CD4-positive, alpha-beta memory T cell (primary cell): ENCODE measurements at regions of chr1 and their contacts with region 1.

Region 1: DNA sequence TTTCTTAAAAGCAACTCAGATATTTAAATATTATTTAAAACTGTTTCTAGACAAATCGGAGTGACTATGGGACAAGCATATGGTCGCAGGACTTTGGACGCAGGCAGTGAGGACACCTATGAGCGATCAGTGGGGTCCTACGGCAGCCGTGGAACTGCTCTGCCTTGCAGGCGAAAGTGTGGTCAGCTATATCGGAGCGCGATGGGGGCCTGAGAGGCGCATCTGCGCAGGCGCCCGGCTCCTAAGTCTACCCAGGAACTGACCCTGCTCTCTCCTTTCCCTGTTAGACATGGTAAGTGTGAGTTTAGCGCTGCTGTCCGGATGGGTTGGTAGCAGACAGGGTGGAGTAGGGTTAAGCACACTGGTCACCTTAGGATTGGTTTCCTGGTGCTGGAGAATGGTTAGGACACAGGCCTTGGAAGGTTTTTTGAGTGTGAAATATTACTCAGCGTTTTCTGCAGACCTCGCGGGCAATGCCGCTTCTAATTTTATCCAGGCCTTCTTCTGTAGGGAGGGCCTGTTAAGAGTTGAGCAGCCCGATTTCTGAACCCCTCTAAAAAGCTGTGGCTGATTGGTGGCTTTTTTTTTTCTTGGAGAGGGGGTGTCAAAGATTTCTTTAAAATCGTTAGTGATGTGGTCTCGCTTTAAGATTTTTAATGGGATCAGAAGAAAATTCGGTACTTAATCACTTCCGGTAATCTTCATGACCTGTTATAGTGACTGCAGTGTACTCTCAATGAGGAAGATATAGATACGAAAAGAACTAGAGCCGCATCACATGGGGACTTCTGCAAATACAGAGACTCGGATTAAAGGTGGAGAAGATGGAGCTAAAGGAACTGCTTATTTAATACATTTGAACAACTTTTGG is at the start of gene RABGGTB:
- DNase-seq: peak; percentile 93 to 94 (median 94)
- H3K4me3 ChIP-seq: peak within 1 kb of the TSS; percentile 88 to 95
- H3K4me3 Mint-ChIP-seq: peak within 1 kb of the TSS; percentile 93 to 100 (median 99)
- H3K27ac ChIP-seq: peak within 1 kb of the TSS; percentile 73
- H3K27ac Mint-ChIP-seq: peak within 1 kb of the TSS; percentile 95 to 100 (median 98)
- H3K4me1 ChIP-seq: peaks cover 50% of the 10 kb centered on the region
- H3K4me1 Mint-ChIP-seq: peaks cover 34 to 61% (median 49%) of the 10 kb centered on the region in 4 donors
- H3K27me3 ChIP-seq: no peaks in the 10 kb centered on the region
- H3K27me3 Mint-ChIP-seq: peaks cover 0 to 3% of the 10 kb centered on the region in 2 donors
- total RNA-seq, gene RABGGTB: 94.4 to 97.8 TPM

Region 2: GRCh38 chr1:74197657-74198552 is 1588.3 kb before region 1 on chr1 and contains the starts of genes FPGT and LRRIQ3:
- CTCF ChIA-PET with region 1: no interaction called
- POLR2A ChIA-PET with region 1: no interaction called
- intact Hi-C with region 1: loop called (anchors 5 kb)
- DNase-seq: peak; percentile 93 to 97 (median 97)
- H3K4me3 ChIP-seq: peak within 1 kb of the TSS; percentile 79 to 92
- H3K4me3 Mint-ChIP-seq: peak within 1 kb of the TSS; percentile 91 to 96 (median 94)
- H3K27ac ChIP-seq: peak within 1 kb of the TSS; percentile 62
- H3K27ac Mint-ChIP-seq: peak within 1 kb of the TSS; percentile 91 to 98 (median 96)
- H3K4me1 ChIP-seq: peaks cover 22% of the 10 kb centered on the region
- H3K4me1 Mint-ChIP-seq: peaks cover 10 to 24% (median 17%) of the 10 kb centered on the region in 4 donors
- H3K27me3 ChIP-seq: no peaks in the 10 kb centered on the region
- H3K27me3 Mint-ChIP-seq: no peaks in the 10 kb centered on the region
- total RNA-seq, gene FPGT: 13.1 to 14.8 TPM
- total RNA-seq, gene LRRIQ3: 2.2 TPM

Region 3: DNA sequence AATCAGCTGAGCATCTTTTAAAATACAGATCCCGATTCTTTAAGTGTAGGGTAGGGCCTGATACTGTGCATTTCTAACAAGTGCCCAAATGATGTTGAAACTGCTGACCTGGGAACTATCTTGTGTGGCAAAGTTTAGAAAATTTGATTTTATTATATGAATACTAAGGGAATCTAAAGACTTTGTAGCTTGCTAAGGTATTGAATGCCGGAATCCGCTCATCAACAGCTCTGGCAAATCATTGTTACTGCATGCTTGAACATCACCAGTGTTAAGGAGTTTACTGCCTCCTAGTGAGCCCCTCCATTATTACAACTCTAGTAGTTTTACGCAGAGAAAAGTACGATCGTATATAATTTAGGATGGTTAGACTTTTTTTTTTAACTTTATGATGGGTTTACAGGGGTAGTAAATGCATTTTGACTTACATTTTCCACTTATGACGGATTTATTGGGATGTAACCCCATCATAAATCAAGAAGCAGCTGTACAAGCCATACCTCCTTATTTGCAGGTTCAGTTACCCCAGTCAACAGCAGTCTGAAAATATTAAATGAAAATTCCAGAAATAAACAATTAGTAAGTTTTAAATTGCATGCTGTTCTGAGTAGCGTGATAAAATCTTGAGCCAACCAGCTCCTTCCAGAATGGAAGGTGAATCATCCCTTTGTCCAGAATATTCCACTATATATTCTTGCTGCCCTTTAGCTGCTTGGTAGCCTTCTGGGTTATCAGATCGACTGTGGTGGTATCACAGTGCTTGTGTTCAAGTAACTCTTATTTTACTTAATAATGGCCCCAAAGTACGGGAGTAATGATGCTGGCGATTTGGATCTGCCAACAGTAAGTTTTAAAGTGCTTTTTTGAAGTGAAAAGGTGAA is 1052.4 kb before region 1 on chr1:
- CTCF ChIA-PET with region 1: no interaction called
- POLR2A ChIA-PET with region 1: interaction called, 4 read pairs
- intact Hi-C with region 1: loop called (anchors 10 kb)
- DNase-seq: peak; percentile 57 to 75 (median 69)
- H3K4me3 ChIP-seq: peak overlapping the region; percentile 88 to 89
- H3K4me3 Mint-ChIP-seq: peak overlapping the region; percentile 93 to 100 (median 96)
- H3K27ac ChIP-seq: peak overlapping the region; percentile 75
- H3K27ac Mint-ChIP-seq: peak overlapping the region; percentile 85 to 99 (median 96)
- H3K4me1 ChIP-seq: peaks cover 37% of the 10 kb centered on the region
- H3K4me1 Mint-ChIP-seq: peaks cover 33 to 48% (median 41%) of the 10 kb centered on the region in 4 donors
- H3K27me3 ChIP-seq: no peaks in the 10 kb centered on the region
- H3K27me3 Mint-ChIP-seq: no peaks in the 10 kb centered on the region

Region 4: DNA sequence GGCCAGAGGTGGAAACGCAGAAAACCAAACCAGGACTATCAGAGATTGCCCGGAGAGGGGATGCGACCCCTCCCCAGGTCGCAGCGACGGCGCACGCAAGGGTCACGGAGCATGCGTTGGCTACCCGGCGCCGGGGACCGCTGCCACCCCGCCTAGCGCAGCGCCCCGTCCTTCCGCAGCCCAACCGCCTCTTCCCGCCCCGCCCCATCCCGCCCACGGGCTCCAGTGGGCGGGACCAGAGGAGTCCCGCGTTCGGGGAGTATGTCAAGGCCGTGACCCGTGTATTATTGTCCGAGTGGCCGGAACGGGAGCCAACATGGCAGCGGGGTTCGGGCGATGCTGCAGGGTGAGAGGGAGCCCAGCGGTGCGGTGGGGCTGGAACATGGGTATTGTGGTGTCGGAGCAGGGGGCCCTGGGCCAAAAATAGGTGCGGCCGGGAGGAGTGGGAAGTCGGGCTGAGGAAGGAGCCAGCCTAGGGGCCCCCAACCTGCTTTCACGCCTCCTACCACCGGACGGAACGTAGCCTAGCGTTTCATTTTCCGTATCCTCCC is 61.7 kb before region 1 on chr1 and contains the start of gene ACADM:
- CTCF ChIA-PET with region 1: no interaction called
- POLR2A ChIA-PET with region 1: interaction called, 14 read pairs
- intact Hi-C with region 1: loop called (anchors 1 kb)
- DNase-seq: peak; percentile 77 to 84 (median 79)
- H3K4me3 ChIP-seq: peak within 1 kb of the TSS; percentile 49 to 80
- H3K4me3 Mint-ChIP-seq: peak within 1 kb of the TSS; percentile 96 to 100 (median 99)
- H3K27ac ChIP-seq: peak within 1 kb of the TSS; percentile 73
- H3K27ac Mint-ChIP-seq: peak within 1 kb of the TSS; percentile 93 to 99 (median 97)
- H3K4me1 ChIP-seq: peaks cover 39% of the 10 kb centered on the region
- H3K4me1 Mint-ChIP-seq: peaks cover 22 to 49% (median 33%) of the 10 kb centered on the region in 4 donors
- H3K27me3 ChIP-seq: no peaks in the 10 kb centered on the region
- H3K27me3 Mint-ChIP-seq: no peaks in the 10 kb centered on the region
- total RNA-seq, gene ACADM: 31.9 to 33.4 TPM

Region 5: DNA sequence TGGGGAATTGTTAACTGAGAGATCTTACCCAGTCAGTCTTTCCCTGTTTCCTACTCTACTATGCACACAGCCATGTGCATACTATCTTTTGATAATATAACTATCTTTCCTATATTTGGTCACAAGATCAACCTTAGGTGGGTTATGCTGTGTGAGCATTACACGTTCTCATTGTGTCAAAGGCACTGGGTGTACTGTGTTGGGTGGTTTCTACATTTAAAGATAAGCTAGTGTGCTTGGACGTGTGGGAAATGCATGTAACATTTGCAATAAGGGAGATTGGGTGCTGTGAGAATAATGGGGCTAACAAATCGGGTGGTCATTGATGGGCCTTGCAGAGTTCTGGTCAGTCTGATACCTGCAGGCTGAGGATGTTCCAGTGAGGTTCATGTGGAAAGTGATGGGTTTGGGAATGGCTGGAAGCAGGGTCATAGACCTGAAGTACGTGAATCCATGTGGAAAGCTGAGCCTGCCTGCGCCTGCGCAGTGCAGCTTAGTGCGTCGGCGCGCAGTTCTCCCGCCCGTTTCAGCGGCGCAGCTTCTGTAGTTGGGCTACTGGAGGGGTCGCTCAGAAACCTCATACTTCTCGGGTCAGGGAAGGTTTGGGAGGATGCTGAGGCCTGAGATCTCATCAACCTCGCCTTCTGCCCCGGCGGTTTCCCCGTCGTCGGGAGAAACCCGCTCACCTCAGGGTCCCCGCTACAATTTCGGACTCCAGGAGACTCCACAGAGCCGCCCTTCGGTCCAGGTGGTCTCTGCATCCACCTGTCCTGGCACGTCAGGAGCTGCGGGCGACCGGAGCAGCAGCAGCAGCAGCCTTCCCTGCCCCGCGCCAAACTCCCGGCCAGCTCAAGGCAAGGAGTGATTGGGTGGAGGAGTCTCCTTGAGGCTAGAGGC is 10.4 kb after region 1 on chr1 and contains the start of gene MSH4:
- CTCF ChIA-PET with region 1: no interaction called
- POLR2A ChIA-PET with region 1: interaction called, 20 read pairs
- intact Hi-C with region 1: no loop called
- DNase-seq: no peak
- H3K4me3 ChIP-seq: no peak within 1 kb of the TSS
- H3K4me3 Mint-ChIP-seq: peak within 1 kb of the TSS in 1 of 8 donors; percentile 46
- H3K27ac ChIP-seq: no peak within 1 kb of the TSS
- H3K27ac Mint-ChIP-seq: peak within 1 kb of the TSS in 3 of 7 donors; percentile 8 to 62 (median 43)
- H3K4me1 ChIP-seq: peaks cover 7% of the 10 kb centered on the region
- H3K4me1 Mint-ChIP-seq: peaks cover 7 to 25% (median 12%) of the 10 kb centered on the region in 4 donors
- H3K27me3 ChIP-seq: no peaks in the 10 kb centered on the region
- H3K27me3 Mint-ChIP-seq: no peaks in the 10 kb centered on the region
- total RNA-seq, gene MSH4: 0.80 to 0.87 TPM

Region 6: GRCh38 chr1:75838079-75838478 is 51.9 kb after region 1 on chr1:
- CTCF ChIA-PET with region 1: no interaction called
- POLR2A ChIA-PET with region 1: no interaction called
- intact Hi-C with region 1: no loop called
- DNase-seq: no peak
- H3K4me3 ChIP-seq: no peak overlapping the region
- H3K4me3 Mint-ChIP-seq: no peak overlapping the region
- H3K27ac ChIP-seq: no peak overlapping the region
- H3K27ac Mint-ChIP-seq: no peak overlapping the region
- H3K4me1 ChIP-seq: no peaks in the 10 kb centered on the region
- H3K4me1 Mint-ChIP-seq: no peaks in the 10 kb centered on the region
- H3K27me3 ChIP-seq: no peaks in the 10 kb centered on the region
- H3K27me3 Mint-ChIP-seq: peaks cover 3 to 9% of the 10 kb centered on the region in 2 donors

Region 7: DNA sequence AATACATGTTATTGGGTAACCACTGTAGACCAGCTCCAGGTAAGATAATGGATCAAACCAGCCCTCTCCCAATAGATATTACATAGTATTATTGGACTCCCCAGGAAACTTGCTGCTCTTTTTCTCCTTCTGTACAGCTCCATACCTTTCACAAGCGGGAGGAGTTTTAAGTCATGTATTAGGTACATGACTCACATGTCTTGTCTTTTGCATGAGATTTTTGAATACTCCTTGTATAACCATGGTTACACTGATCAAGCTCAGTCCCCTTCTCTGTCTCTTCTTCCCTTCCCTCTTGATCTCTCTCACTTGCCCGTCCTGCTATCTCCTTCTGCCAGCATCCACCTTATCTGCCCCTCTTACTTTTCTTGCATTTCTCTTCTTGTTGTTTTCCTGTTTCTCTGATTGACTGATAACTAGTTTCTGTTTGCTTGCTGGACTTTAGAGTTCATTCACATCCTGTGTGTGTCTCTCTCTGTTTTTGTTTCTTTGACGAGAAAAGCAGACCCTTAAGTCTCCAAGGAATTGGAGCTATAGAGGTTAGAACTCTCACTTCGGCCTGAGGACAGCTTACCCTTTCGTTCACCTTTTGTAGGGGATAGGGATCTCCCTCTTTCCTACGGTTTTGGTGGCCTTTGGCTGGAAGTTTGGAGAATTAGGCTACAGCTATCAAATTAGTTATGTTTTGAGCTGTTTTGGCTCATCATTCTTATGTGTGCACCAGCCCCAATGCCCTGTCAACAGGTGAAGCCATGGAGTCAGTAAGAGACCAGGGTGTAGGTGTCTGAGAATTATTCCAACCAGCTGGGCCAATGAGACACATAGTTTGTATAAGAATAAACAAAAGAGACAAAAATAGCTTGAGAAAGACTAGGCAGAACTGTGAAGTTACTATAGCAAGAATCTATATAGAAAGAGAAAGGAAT is 195.0 kb after region 1 on chr1:
- CTCF ChIA-PET with region 1: no interaction called
- POLR2A ChIA-PET with region 1: no interaction called
- intact Hi-C with region 1: no loop called
- DNase-seq: no peak
- H3K4me3 ChIP-seq: no peak overlapping the region
- H3K4me3 Mint-ChIP-seq: no peak overlapping the region
- H3K27ac ChIP-seq: no peak overlapping the region
- H3K27ac Mint-ChIP-seq: no peak overlapping the region
- H3K4me1 ChIP-seq: no peaks in the 10 kb centered on the region
- H3K4me1 Mint-ChIP-seq: no peaks in the 10 kb centered on the region
- H3K27me3 ChIP-seq: no peaks in the 10 kb centered on the region
- H3K27me3 Mint-ChIP-seq: peaks cover 2 to 6% of the 10 kb centered on the region in 2 donors

Region 8: GRCh38 chr1:76074321-76075187 is 288.3 kb after region 1 on chr1 and contains the start of gene ST6GALNAC3:
- CTCF ChIA-PET with region 1: no interaction called
- POLR2A ChIA-PET with region 1: no interaction called
- intact Hi-C with region 1: loop called (anchors 5 kb)
- DNase-seq: peak; percentile 70 to 76 (median 75)
- H3K4me3 ChIP-seq: peak within 1 kb of the TSS; percentile 56
- H3K4me3 Mint-ChIP-seq: peak within 1 kb of the TSS; percentile 85 to 92 (median 89)
- H3K27ac ChIP-seq: no peak within 1 kb of the TSS
- H3K27ac Mint-ChIP-seq: peak within 1 kb of the TSS; percentile 38 to 82 (median 75)
- H3K4me1 ChIP-seq: peaks cover 7% of the 10 kb centered on the region
- H3K4me1 Mint-ChIP-seq: peaks cover 12 to 23% (median 17%) of the 10 kb centered on the region in 4 donors
- H3K27me3 ChIP-seq: no peaks in the 10 kb centered on the region
- H3K27me3 Mint-ChIP-seq: peaks cover 1 to 3% of the 10 kb centered on the region in 2 donors
- total RNA-seq, gene ST6GALNAC3: 0.47 to 1.2 TPM